ENCODE measurements at regions of chr6 and their contacts with region 1.

Region 1: GRCh38 chr6:30828027-30828960 is 56.0 kb upstream of the DDR1 start:
- DNase-seq: peak; percentile 52
- ATAC-seq: peak; percentile 88
- H3K4me3 Mint-ChIP-seq: no peak overlapping the region
- H3K27ac Mint-ChIP-seq: no peak overlapping the region
- H3K4me1 Mint-ChIP-seq: peaks cover 21% of the 10 kb centered on the region
- H3K27me3 Mint-ChIP-seq: peaks cover 8% of the 10 kb centered on the region
- CTCF ChIP-seq: peak; percentile 82

Region 2: DNA sequence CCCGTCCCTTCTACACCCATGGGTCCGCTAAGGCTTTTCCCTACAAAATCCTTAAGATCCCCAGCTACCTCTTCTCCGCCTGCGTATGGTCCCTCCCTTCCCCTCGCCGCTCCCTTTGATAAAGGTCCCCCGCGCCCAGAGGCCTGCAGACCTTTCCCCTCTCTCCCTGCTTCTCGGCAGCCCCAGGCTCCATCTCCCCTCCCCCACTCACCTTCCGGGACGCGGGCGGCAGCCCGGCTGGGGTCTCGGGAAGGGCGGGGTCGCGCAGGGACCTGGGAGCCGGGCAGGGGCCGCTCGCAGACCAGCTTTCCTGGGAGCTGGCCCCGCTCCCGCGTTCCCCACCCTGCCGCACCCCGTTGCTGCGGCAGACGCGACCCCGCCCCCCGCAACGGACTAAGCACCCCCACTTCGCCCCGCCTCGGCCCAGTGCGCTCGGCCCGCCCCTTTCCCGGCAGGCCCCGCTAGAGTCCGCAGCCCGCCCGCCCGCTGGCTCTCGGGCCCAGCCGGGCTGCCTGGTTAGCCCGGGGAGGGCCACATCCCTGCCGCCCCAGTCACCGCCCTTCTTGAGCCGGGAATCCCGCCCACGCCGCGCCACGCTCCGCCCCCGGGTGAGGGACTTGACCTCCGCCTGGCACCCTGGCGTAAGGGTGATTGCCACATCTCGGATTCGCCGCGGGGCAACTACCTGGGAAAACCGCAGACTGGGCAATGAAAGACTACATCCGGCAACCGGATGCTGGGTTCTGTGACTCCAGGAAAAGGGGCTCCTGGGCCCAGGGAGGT is 85.8 kb before region 1 on chr6 and contains the start of gene FLOT1:
- CTCF ChIA-PET with region 1: interaction called, 4 read pairs
- POLR2A ChIA-PET with region 1: no interaction called
- intact Hi-C with region 1: loop called (anchors 2 kb)
- DNase-seq: peak; percentile 89
- ATAC-seq: peak; percentile 88
- H3K4me3 Mint-ChIP-seq: peak within 1 kb of the TSS; percentile 89
- H3K27ac Mint-ChIP-seq: peak within 1 kb of the TSS; percentile 64
- H3K4me1 Mint-ChIP-seq: peaks cover 33% of the 10 kb centered on the region
- H3K27me3 Mint-ChIP-seq: no peaks in the 10 kb centered on the region
- CTCF ChIP-seq: no peak
- total RNA-seq, gene FLOT1: 49.1 and 52.0 TPM in 2 replicates

Region 3: GRCh38 chr6:30847971-30848436 is 19.7 kb after region 1 on chr6:
- CTCF ChIA-PET with region 1: no interaction called
- POLR2A ChIA-PET with region 1: no interaction called
- intact Hi-C with region 1: no loop called
- DNase-seq: no peak
- ATAC-seq: no peak
- H3K4me3 Mint-ChIP-seq: no peak overlapping the region
- H3K27ac Mint-ChIP-seq: no peak overlapping the region
- H3K4me1 Mint-ChIP-seq: no peaks in the 10 kb centered on the region
- H3K27me3 Mint-ChIP-seq: peaks cover 10% of the 10 kb centered on the region
- CTCF ChIP-seq: no peak

Region 4: GRCh38 chr6:30877419-30878371 is 49.4 kb after region 1 on chr6:
- CTCF ChIA-PET with region 1: interaction called, 8 read pairs
- POLR2A ChIA-PET with region 1: no interaction called
- intact Hi-C with region 1: loop called (anchors 1 kb)
- DNase-seq: peak; percentile 51
- ATAC-seq: peak; percentile 84
- H3K4me3 Mint-ChIP-seq: no peak overlapping the region
- H3K27ac Mint-ChIP-seq: no peak overlapping the region
- H3K4me1 Mint-ChIP-seq: peaks cover 37% of the 10 kb centered on the region
- H3K27me3 Mint-ChIP-seq: no peaks in the 10 kb centered on the region
- CTCF ChIP-seq: peak; percentile 19

Region 5: GRCh38 chr6:31068669-31069340 is 240.5 kb after region 1 on chr6:
- CTCF ChIA-PET with region 1: interaction called, 17 read pairs
- POLR2A ChIA-PET with region 1: no interaction called
- intact Hi-C with region 1: loop called (anchors 1 kb)
- DNase-seq: peak; percentile 52
- ATAC-seq: peak; percentile 99
- H3K4me3 Mint-ChIP-seq: no peak overlapping the region
- H3K27ac Mint-ChIP-seq: peak overlapping the region; percentile 24
- H3K4me1 Mint-ChIP-seq: peaks cover 5% of the 10 kb centered on the region
- H3K27me3 Mint-ChIP-seq: no peaks in the 10 kb centered on the region
- CTCF ChIP-seq: peak; percentile 55

Region 6: GRCh38 chr6:31079656-31080261 is 251.5 kb after region 1 on chr6:
- CTCF ChIA-PET with region 1: interaction called, 73 read pairs
- POLR2A ChIA-PET with region 1: no interaction called
- intact Hi-C with region 1: loop called (anchors 1 kb)
- DNase-seq: peak; percentile 34
- ATAC-seq: peak; percentile 84
- H3K4me3 Mint-ChIP-seq: peak overlapping the region; percentile 46
- H3K27ac Mint-ChIP-seq: no peak overlapping the region
- H3K4me1 Mint-ChIP-seq: peaks cover 3% of the 10 kb centered on the region
- H3K27me3 Mint-ChIP-seq: peaks cover 5% of the 10 kb centered on the region
- CTCF ChIP-seq: peak; percentile 82

Region 7: GRCh38 chr6:31087494-31088089 is 259.3 kb after region 1 on chr6:
- CTCF ChIA-PET with region 1: interaction called, 73 read pairs
- POLR2A ChIA-PET with region 1: no interaction called
- intact Hi-C with region 1: loop called (anchors 1 kb)
- DNase-seq: peak; percentile 67
- ATAC-seq: peak; percentile 96
- H3K4me3 Mint-ChIP-seq: no peak overlapping the region
- H3K27ac Mint-ChIP-seq: no peak overlapping the region
- H3K4me1 Mint-ChIP-seq: peaks cover 4% of the 10 kb centered on the region
- H3K27me3 Mint-ChIP-seq: peaks cover 17% of the 10 kb centered on the region
- CTCF ChIP-seq: peak; percentile 37

Measured in activated B cell treated with CpG ODN at 0.5 μM for 24 hours (primary cell).